A673 (cell line): ENCODE measurements at regions of chr17 and their contacts with region 1.

Region 1: DNA sequence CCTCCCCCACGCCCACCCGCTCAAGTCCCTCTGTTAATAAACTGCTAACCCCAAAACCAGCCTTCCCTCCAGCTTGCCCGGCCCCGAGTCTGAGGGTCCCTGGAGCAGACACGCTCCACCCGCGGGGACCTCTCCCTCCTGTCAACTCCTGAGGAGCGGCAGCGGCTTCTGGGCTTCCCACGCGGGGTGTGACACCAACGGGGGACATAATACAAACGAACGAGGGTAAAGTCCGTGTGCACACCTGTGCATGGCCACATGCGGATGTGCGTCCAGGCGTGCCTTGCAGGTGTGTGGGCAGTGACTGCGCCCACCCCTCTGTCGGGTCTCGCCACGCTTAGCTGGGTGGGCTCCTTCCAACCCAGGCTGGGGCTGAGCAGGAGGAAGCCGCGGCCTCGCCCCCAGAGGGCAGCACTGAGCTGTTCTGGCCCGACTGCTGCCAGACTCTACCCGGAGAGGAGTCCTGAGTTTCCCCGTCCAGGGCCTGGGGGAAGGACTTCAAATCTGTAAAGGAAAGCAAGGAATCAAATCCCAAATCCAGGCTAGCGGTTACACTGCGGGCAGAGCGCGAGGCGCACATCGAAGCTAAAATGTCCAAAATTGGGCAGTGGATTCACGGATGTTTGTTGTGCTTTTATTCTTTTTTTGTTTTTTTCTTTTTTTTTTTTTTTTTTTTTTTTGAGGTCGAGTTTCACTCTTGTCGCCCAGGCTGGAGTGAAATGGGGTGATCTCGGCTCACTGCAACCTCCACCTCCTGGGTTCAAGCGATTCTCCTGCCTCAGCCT is 24.2 kb upstream of the KRT17 start:
- DNase-seq: peak; percentile 82
- H3K4me3 ChIP-seq: peak overlapping the region; percentile 41
- H3K27ac ChIP-seq: peak overlapping the region; percentile 61
- H3K4me1 ChIP-seq: peaks cover 6% of the 10 kb centered on the region
- H3K27me3 ChIP-seq: no peaks in the 10 kb centered on the region
- CTCF ChIP-seq: peak; percentile 78

Region 2: DNA sequence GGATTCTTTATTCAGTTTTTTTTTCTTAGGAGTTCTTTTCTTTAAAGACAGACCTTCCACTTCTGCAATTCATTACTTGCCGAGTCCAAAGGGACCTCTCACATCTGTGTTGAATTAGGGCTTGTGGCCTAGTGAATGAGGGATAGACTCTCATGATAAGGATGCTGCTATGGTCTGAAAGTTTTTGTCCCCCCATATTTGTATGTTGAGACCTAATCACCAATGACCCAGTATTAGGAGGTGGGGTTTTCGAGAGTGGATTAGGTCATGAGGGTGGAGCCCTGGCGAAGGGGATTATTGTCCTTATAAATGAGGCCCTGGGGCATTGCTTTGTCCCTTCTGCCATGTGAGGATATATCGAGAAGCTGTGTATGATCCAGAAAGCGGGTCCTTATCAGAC is 791.1 kb before region 1 on chr17:
- CTCF ChIA-PET with region 1: no interaction called
- POLR2A ChIA-PET with region 1: no interaction called
- intact Hi-C with region 1: loop called (anchors 5 kb)
- DNase-seq: peak; percentile 51
- H3K4me3 ChIP-seq: no peak overlapping the region
- H3K27ac ChIP-seq: peak overlapping the region; percentile 60
- H3K4me1 ChIP-seq: peaks cover 11% of the 10 kb centered on the region
- H3K27me3 ChIP-seq: no peaks in the 10 kb centered on the region
- CTCF ChIP-seq: no peak

Region 3: DNA sequence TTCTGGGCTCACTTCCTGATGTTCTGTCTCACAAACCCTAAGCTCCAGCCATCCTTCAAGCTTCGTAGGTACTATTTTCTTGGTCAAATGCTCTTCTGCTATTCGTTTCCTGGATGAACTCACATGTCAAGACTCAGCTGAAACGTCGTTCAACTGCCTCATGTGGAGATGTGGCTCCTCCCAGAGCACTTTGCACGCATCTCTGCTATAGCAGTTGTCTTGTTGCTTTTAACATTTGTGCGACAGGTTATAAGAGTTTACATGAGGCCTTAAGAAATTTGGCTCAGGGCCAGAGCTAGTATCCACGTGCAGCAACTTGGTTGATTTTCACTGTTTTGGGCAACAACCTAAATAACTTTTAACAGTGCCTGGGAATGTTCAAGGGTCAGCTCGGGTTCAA is 661.7 kb before region 1 on chr17:
- CTCF ChIA-PET with region 1: interaction called, 11 read pairs
- POLR2A ChIA-PET with region 1: no interaction called
- intact Hi-C with region 1: no loop called
- DNase-seq: peak; percentile 43
- H3K4me3 ChIP-seq: no peak overlapping the region
- H3K27ac ChIP-seq: no peak overlapping the region
- H3K4me1 ChIP-seq: peaks cover 7% of the 10 kb centered on the region
- H3K27me3 ChIP-seq: no peaks in the 10 kb centered on the region
- CTCF ChIP-seq: no peak

Region 4: DNA sequence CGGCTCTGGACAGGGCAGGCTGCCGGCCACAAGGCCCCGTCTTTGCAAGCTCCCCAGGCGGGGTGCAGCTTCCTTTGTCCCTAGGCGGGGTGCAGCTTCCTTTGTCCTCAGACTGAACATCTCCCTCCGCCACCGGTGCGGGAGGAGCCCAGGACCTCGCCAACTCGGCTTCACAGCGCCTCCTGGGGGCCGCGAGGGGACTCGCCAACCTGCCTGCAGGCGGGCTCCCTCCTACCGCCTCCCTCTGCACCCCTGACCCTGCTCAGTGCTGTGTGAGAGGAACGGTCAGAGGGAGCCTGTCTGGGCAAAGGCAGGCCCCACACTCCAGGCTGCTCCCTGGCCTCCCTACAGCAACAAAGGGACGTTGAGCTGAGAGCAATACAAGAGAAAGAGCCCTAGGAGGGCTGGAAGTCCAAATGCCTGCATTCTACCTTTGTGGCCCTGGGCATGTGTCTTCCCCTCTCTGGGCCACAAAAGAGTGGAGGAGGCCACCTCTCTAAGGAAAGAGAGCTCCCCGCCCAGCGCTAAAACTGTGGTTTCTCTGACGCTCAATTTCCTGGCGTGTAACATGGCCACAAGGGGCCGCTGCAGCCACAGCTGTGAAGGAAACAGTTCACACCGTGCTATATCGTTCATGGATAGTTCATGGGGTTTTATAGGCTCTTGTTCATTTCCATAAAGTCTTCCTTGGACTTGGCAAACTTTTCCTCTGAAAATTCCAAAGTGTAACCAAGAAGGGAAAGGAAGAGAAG is 99.6 kb before region 1 on chr17:
- CTCF ChIA-PET with region 1: interaction called, 24 read pairs
- POLR2A ChIA-PET with region 1: no interaction called
- intact Hi-C with region 1: loop called (anchors 2 kb)
- DNase-seq: peak; percentile 74
- H3K4me3 ChIP-seq: no peak overlapping the region
- H3K27ac ChIP-seq: peak overlapping the region; percentile 50
- H3K4me1 ChIP-seq: no peaks in the 10 kb centered on the region
- H3K27me3 ChIP-seq: no peaks in the 10 kb centered on the region
- CTCF ChIP-seq: peak; percentile 74

Region 5: GRCh38 chr17:41579484-41580243 is 68.9 kb before region 1 on chr17:
- CTCF ChIA-PET with region 1: interaction called, 10 read pairs
- POLR2A ChIA-PET with region 1: no interaction called
- intact Hi-C with region 1: no loop called
- DNase-seq: peak; percentile 84
- H3K4me3 ChIP-seq: no peak overlapping the region
- H3K27ac ChIP-seq: no peak overlapping the region
- H3K4me1 ChIP-seq: no peaks in the 10 kb centered on the region
- H3K27me3 ChIP-seq: no peaks in the 10 kb centered on the region
- CTCF ChIP-seq: peak; percentile 73

Region 6: GRCh38 chr17:41615454-41615853 is 33.1 kb before region 1 on chr17:
- CTCF ChIA-PET with region 1: no interaction called
- POLR2A ChIA-PET with region 1: no interaction called
- intact Hi-C with region 1: no loop called
- DNase-seq: no peak
- H3K4me3 ChIP-seq: no peak overlapping the region
- H3K27ac ChIP-seq: no peak overlapping the region
- H3K4me1 ChIP-seq: peaks cover 4% of the 10 kb centered on the region
- H3K27me3 ChIP-seq: no peaks in the 10 kb centered on the region
- CTCF ChIP-seq: no peak

Region 7: GRCh38 chr17:41665566-41666236 is 17.1 kb after region 1 on chr17:
- CTCF ChIA-PET with region 1: interaction called, 12 read pairs
- POLR2A ChIA-PET with region 1: no interaction called
- intact Hi-C with region 1: loop called (anchors 1 kb)
- DNase-seq: peak; percentile 81
- H3K4me3 ChIP-seq: peak overlapping the region; percentile 43
- H3K27ac ChIP-seq: no peak overlapping the region
- H3K4me1 ChIP-seq: peaks cover 5% of the 10 kb centered on the region
- H3K27me3 ChIP-seq: no peaks in the 10 kb centered on the region
- CTCF ChIP-seq: peak; percentile 77

Region 8: GRCh38 chr17:41678907-41679739 is 30.5 kb after region 1 on chr17:
- CTCF ChIA-PET with region 1: no interaction called
- POLR2A ChIA-PET with region 1: no interaction called
- intact Hi-C with region 1: no loop called
- DNase-seq: peak; percentile 49
- H3K4me3 ChIP-seq: peak overlapping the region; percentile 19
- H3K27ac ChIP-seq: peak overlapping the region; percentile 72
- H3K4me1 ChIP-seq: no peaks in the 10 kb centered on the region
- H3K27me3 ChIP-seq: no peaks in the 10 kb centered on the region
- CTCF ChIP-seq: no peak